Naive thymus-derived CD4-positive, alpha-beta T cell (primary cell): ENCODE measurements at regions of chr20 and their contacts with region 1.

Region 1: GRCh38 chr20:62302341-62303058 is at the start of gene ADRM1:
- DNase-seq: peak; percentile 91 to 99 (median 96)
- ATAC-seq: peak; percentile 94
- H3K4me3 ChIP-seq: peak within 1 kb of the TSS; percentile 94
- H3K4me3 Mint-ChIP-seq: peak within 1 kb of the TSS; percentile 89 to 98 (median 96)
- H3K27ac ChIP-seq: peak within 1 kb of the TSS; percentile 85
- H3K27ac Mint-ChIP-seq: peak within 1 kb of the TSS; percentile 90 to 100 (median 96)
- H3K4me1 ChIP-seq: peaks cover 17 to 19% of the 10 kb centered on the region in 2 donors
- H3K4me1 Mint-ChIP-seq: peaks cover 17 to 32% (median 22%) of the 10 kb centered on the region in 7 donors
- H3K27me3 ChIP-seq: no peaks in the 10 kb centered on the region
- H3K27me3 Mint-ChIP-seq: no peaks in the 10 kb centered on the region
- total RNA-seq, gene ADRM1: 51.3 to 117 (median 55.0) TPM

Region 2: GRCh38 chr20:62025832-62026563 is 276.5 kb before region 1 on chr20:
- CTCF ChIA-PET with region 1: no interaction called
- POLR2A ChIA-PET with region 1: no interaction called
- intact Hi-C with region 1: loop called in 1 of 2 experiments (anchors 5 kb)
- DNase-seq: peak in 7 of 9 donors; percentile 39 to 58 (median 50)
- ATAC-seq: peak; percentile 75
- H3K4me3 ChIP-seq: no peak overlapping the region
- H3K4me3 Mint-ChIP-seq: peak overlapping the region in 6 of 10 donors; percentile 5 to 56 (median 26)
- H3K27ac ChIP-seq: no peak overlapping the region
- H3K27ac Mint-ChIP-seq: peak overlapping the region in 8 of 9 donors; percentile 2 to 79 (median 44)
- H3K4me1 ChIP-seq: peaks cover 5 to 21% of the 10 kb centered on the region in 2 donors
- H3K4me1 Mint-ChIP-seq: peaks cover 25 to 73% (median 55%) of the 10 kb centered on the region in 7 donors
- H3K27me3 ChIP-seq: no peaks in the 10 kb centered on the region
- H3K27me3 Mint-ChIP-seq: no peaks in the 10 kb centered on the region

Region 3: GRCh38 chr20:62143118-62143973 is 159.2 kb before region 1 on chr20 and contains the starts of genes PSMA7 and SS18L1:
- CTCF ChIA-PET with region 1: no interaction called
- POLR2A ChIA-PET with region 1: interaction called, 3 read pairs
- intact Hi-C with region 1: loop called (anchors 1 kb)
- DNase-seq: peak; percentile 79 to 90 (median 87)
- ATAC-seq: peak; percentile 91
- H3K4me3 ChIP-seq: peak within 1 kb of the TSS; percentile 65
- H3K4me3 Mint-ChIP-seq: peak within 1 kb of the TSS; percentile 89 to 98 (median 92)
- H3K27ac ChIP-seq: peak within 1 kb of the TSS; percentile 75
- H3K27ac Mint-ChIP-seq: peak within 1 kb of the TSS; percentile 80 to 97 (median 93)
- H3K4me1 ChIP-seq: peaks cover 28 to 36% of the 10 kb centered on the region in 2 donors
- H3K4me1 Mint-ChIP-seq: peaks cover 36 to 64% (median 55%) of the 10 kb centered on the region in 7 donors
- H3K27me3 ChIP-seq: no peaks in the 10 kb centered on the region
- H3K27me3 Mint-ChIP-seq: no peaks in the 10 kb centered on the region
- total RNA-seq, gene PSMA7: 125 to 301 (median 165) TPM
- total RNA-seq, gene SS18L1: 17.8 to 26.7 (median 22.6) TPM

Region 4: GRCh38 chr20:62368976-62369814 is 66.7 kb after region 1 on chr20:
- CTCF ChIA-PET with region 1: no interaction called
- POLR2A ChIA-PET with region 1: interaction called, 3 read pairs
- intact Hi-C with region 1: loop called in 1 of 2 experiments (anchors 5 kb)
- DNase-seq: no peak
- ATAC-seq: no peak
- H3K4me3 ChIP-seq: no peak overlapping the region
- H3K4me3 Mint-ChIP-seq: peak overlapping the region in 3 of 10 donors; percentile 42 to 87 (median 71)
- H3K27ac ChIP-seq: no peak overlapping the region
- H3K27ac Mint-ChIP-seq: no peak overlapping the region
- H3K4me1 ChIP-seq: peaks cover 0 to 11% of the 10 kb centered on the region in 2 donors
- H3K4me1 Mint-ChIP-seq: peaks cover 0 to 8% (median 2%) of the 10 kb centered on the region in 7 donors
- H3K27me3 ChIP-seq: peaks cover 0 to 20% of the 10 kb centered on the region in 2 donors
- H3K27me3 Mint-ChIP-seq: peaks cover 9 to 36% (median 16%) of the 10 kb centered on the region in 5 donors

Region 5: GRCh38 chr20:62500237-62500864 is 197.9 kb after region 1 on chr20:
- CTCF ChIA-PET with region 1: interaction called, 3 read pairs
- POLR2A ChIA-PET with region 1: no interaction called
- intact Hi-C with region 1: loop called (anchors 2 to 5 kb)
- DNase-seq: peak; percentile 43 to 84 (median 70)
- ATAC-seq: peak; percentile 73
- H3K4me3 ChIP-seq: no peak overlapping the region
- H3K4me3 Mint-ChIP-seq: peak overlapping the region in 1 of 10 donors; percentile 24
- H3K27ac ChIP-seq: no peak overlapping the region
- H3K27ac Mint-ChIP-seq: peak overlapping the region in 3 of 9 donors; percentile 60 to 95 (median 70)
- H3K4me1 ChIP-seq: peaks cover 0 to 5% of the 10 kb centered on the region in 2 donors
- H3K4me1 Mint-ChIP-seq: peaks cover 0 to 27% (median 9%) of the 10 kb centered on the region in 7 donors
- H3K27me3 ChIP-seq: no peaks in the 10 kb centered on the region
- H3K27me3 Mint-ChIP-seq: peaks cover 0 to 5% (median 0%) of the 10 kb centered on the region in 5 donors

Region 6: DNA sequence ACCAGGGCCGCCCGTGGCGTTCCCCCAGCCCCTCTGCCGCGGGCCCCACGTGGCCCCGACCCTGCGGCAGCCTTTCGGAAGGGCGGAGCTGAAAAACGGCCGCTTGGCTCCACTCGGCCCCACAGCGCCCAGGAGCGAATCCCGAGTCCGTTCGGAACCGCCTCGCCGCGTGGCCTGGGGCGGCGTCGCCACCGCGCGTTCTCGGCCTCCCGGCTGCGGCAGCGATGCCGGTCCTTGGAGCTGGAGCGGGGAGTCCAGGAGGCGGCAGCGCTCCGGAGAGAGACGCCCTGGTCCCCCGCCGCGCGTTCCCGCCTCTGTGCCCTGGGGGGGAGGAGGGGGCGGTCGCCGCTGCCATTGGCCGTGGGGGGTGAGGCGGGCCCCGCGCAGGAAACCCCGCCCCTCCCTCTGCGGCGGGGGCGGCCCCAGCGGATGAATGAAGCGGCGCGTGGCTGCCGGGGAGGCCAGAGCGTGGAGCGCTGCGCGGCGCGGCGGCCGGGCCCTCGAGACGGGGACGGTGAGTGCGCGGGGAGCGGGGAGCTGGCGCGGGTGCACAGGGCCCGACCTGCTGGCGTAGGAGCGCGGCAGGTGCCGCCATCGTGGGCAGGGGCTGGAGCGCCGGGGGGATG is 339.7 kb after region 1 on chr20 and contains the start of gene SLCO4A1:
- CTCF ChIA-PET with region 1: no interaction called
- POLR2A ChIA-PET with region 1: no interaction called
- intact Hi-C with region 1: loop called in 1 of 2 experiments (anchors 1 kb)
- DNase-seq: peak; percentile 76 to 95 (median 83)
- ATAC-seq: peak; percentile 97
- H3K4me3 ChIP-seq: peak within 1 kb of the TSS; percentile 57
- H3K4me3 Mint-ChIP-seq: peak within 1 kb of the TSS; percentile 63 to 88 (median 78)
- H3K27ac ChIP-seq: peak within 1 kb of the TSS; percentile 56
- H3K27ac Mint-ChIP-seq: peak within 1 kb of the TSS in 5 of 9 donors; percentile 10 to 68 (median 53)
- H3K4me1 ChIP-seq: peaks cover 11 to 14% of the 10 kb centered on the region in 2 donors
- H3K4me1 Mint-ChIP-seq: peaks cover 0 to 35% (median 5%) of the 10 kb centered on the region in 7 donors
- H3K27me3 ChIP-seq: no peaks in the 10 kb centered on the region
- H3K27me3 Mint-ChIP-seq: peaks cover 0 to 11% (median 0%) of the 10 kb centered on the region in 5 donors
- total RNA-seq, gene SLCO4A1: 0.81 to 45.5 (median 1.4) TPM

Region 7: DNA sequence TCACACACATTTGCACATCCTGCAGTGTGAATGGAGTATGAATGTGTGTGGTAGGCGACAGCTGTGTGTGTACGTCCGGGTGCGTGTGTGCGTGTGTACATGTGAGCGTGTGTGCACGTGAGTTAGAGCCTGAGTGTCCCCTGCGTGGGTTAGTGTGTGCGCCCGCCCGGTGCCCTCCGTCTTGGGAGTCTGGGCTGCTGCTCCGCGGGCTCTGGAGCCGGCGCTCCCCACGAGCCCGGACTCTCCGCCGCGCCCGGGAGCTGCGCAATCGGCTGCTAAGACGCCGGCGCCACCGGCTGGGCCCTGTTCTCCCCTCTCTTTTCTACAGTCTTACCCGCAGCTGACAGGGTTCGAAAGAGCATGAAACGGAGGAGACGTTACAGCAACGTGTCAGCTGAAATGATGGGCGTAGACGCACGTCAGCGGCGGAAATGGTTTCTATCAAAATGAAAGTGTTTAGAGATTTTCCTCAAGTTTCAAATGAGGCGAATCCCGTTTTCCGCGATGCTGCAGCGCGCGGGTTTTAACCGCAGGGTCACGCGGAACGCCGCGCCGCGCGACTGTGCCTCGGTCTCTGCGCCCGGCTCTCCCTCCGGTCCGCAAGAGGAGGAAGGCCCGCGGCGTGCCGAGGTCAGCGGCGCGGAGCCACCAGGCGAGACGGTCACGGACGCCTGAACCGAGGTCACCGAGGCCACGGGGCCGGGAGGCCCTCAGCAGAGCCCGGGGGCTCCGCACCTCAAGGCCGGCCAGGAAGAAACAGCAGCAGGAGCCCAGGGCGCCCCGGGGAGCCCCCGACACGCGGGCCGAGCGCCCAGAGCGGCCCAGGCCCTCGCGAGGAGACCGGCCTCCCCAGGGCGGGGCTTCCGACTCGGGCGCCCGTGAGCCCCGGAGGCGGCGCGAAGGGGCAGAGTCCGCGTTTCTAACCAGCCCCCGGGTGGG is 799.5 kb after region 1 on chr20:
- CTCF ChIA-PET with region 1: no interaction called
- POLR2A ChIA-PET with region 1: no interaction called
- intact Hi-C with region 1: loop called in 1 of 2 experiments (anchors 5 kb)
- DNase-seq: peak; percentile 53 to 84 (median 80)
- ATAC-seq: peak; percentile 76
- H3K4me3 ChIP-seq: peak overlapping the region; percentile 84
- H3K4me3 Mint-ChIP-seq: peak overlapping the region; percentile 86 to 95 (median 92)
- H3K27ac ChIP-seq: peak overlapping the region; percentile 88
- H3K27ac Mint-ChIP-seq: peak overlapping the region; percentile 90 to 99 (median 96)
- H3K4me1 ChIP-seq: no peaks in the 10 kb centered on the region
- H3K4me1 Mint-ChIP-seq: peaks cover 0 to 8% (median 5%) of the 10 kb centered on the region in 7 donors
- H3K27me3 ChIP-seq: no peaks in the 10 kb centered on the region
- H3K27me3 Mint-ChIP-seq: no peaks in the 10 kb centered on the region